ENCODE measurements at regions of chr16 and their contacts with region 1.

Region 1: GRCh38 chr16:11407047-11407982 is 62.1 kb downstream of the RMI2 start:
- DNase-seq: peak in 1 of 2 donors; percentile 69
- ATAC-seq: peak; percentile 77
- H3K4me3 ChIP-seq: no peak overlapping the region
- H3K27ac ChIP-seq: no peak overlapping the region
- H3K4me1 ChIP-seq: no peaks in the 10 kb centered on the region
- H3K27me3 ChIP-seq: no peaks in the 10 kb centered on the region

Region 2: GRCh38 chr16:11484691-11485258 is 77.5 kb after region 1 on chr16:
- intact Hi-C with region 1: loop called in 1 of 2 experiments (anchors 5 kb)
- DNase-seq: peak; percentile 43 to 52
- ATAC-seq: no peak
- H3K4me3 ChIP-seq: no peak overlapping the region
- H3K27ac ChIP-seq: no peak overlapping the region
- H3K4me1 ChIP-seq: no peaks in the 10 kb centered on the region
- H3K27me3 ChIP-seq: no peaks in the 10 kb centered on the region

Region 3: GRCh38 chr16:11586856-11587642 is 179.7 kb after region 1 on chr16 and contains the start of gene LITAF:
- intact Hi-C with region 1: loop called in 1 of 2 experiments (anchors 5 kb)
- DNase-seq: peak; percentile 79 to 92
- ATAC-seq: peak; percentile 84
- H3K4me3 ChIP-seq: peak within 1 kb of the TSS; percentile 95 to 97
- H3K27ac ChIP-seq: peak within 1 kb of the TSS; percentile 95 to 97
- H3K4me1 ChIP-seq: peaks cover 0 to 10% of the 10 kb centered on the region in 2 donors
- H3K27me3 ChIP-seq: no peaks in the 10 kb centered on the region
- total RNA-seq, gene LITAF: 145 to 157 TPM

Region 4: DNA sequence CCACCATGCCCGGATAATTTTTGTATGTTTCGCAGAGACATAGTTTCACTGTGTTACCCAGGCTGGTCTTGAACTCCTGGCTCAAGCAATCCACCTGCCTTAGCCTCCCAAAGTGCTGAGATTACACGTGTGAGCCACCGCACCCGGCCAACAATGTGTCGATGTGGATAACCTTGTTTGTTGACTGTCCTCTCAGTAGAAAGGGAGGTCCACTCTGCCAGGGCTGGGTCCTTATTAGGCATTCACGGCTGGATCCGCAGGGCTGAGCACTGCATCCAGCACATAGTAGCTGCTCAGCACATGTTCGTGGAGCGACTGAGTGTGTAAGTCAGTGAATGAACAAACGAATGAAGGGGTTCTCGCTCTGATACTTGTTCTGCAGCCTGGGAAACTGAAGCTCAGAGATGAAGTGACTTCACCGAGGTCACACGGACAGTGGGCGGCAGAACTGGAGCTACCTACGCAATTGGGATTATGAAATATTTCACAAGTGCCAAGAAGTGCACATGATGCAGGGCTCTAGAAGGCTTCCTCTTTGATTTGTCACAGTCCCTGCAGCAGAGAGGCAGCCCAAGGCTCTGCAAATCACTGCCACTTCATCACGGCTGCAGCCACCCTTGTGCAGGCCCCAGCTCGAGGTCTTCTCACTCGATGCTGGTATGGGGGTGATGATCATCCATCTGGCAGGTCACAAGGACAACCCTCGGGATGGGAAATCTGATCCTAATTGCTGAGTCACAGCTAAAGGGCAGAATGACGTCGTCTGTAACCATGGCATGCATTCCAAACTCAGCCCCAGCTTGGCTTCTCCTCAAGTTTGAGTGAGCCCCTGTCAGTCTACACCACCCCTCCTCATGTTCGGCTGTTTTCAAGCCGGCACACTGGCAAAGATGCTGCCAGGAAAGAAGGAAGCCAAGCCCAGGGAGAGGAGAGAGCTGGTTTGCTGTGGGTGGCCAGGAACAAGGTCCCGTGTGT is 232.9 kb after region 1 on chr16:
- intact Hi-C with region 1: loop called (anchors 2 to 5 kb)
- DNase-seq: peak; percentile 86 to 90
- ATAC-seq: peak; percentile 92
- H3K4me3 ChIP-seq: no peak overlapping the region
- H3K27ac ChIP-seq: peak overlapping the region; percentile 46 to 71
- H3K4me1 ChIP-seq: no peaks in the 10 kb centered on the region
- H3K27me3 ChIP-seq: no peaks in the 10 kb centered on the region

Measured in aorta (tissue), 5 donors.